ENCODE measurements at regions of chr6 and their contacts with region 1.

Region 1: GRCh38 chr6:37169496-37170272 is at the start of gene PIM1:
- DNase-seq: peak; percentile 98
- ATAC-seq: peak; percentile 84
- H3K4me3 ChIP-seq: peak within 1 kb of the TSS; percentile 23 to 87 (median 82)
- H3K4me3 Mint-ChIP-seq: peak within 1 kb of the TSS; percentile 92
- H3K27ac ChIP-seq: peak within 1 kb of the TSS; percentile 68 to 85
- H3K27ac Mint-ChIP-seq: peak within 1 kb of the TSS; percentile 93
- H3K4me1 ChIP-seq: peaks cover 38 to 46% of the 10 kb centered on the region in 2 donors
- H3K4me1 Mint-ChIP-seq: peaks cover 45% of the 10 kb centered on the region
- H3K27me3 ChIP-seq: no peaks in the 10 kb centered on the region
- H3K27me3 Mint-ChIP-seq: no peaks in the 10 kb centered on the region
- CTCF ChIP-seq: no peak
- total RNA-seq, gene PIM1: 99.7 and 102 TPM in 2 replicates

Region 2: DNA sequence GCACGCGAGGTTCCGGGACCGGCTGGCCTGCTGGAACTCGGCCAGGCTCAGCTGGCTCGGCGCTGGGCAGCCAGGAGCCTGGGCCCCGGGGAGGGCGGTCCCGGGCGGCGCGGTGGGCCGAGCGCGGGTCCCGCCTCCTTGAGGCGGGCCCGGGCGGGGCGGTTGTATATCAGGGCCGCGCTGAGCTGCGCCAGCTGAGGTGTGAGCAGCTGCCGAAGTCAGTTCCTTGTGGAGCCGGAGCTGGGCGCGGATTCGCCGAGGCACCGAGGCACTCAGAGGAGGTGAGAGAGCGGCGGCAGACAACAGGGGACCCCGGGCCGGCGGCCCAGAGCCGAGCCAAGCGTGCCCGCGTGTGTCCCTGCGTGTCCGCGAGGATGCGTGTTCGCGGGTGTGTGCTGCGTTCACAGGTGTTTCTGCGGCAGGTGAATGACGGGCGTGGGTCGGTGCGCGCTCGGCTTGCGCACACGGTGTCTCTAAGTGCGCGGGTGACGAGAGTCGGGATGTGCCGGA is 491.1 kb before region 1 on chr6 and contains the start of gene CDKN1A:
- CTCF ChIA-PET with region 1: no interaction called
- POLR2A ChIA-PET with region 1: interaction called, 3 read pairs
- intact Hi-C with region 1: loop called (anchors 10 kb)
- DNase-seq: peak; percentile 92
- ATAC-seq: peak; percentile 51
- H3K4me3 ChIP-seq: peak within 1 kb of the TSS; percentile 55 to 98 (median 71)
- H3K4me3 Mint-ChIP-seq: peak within 1 kb of the TSS; percentile 99
- H3K27ac ChIP-seq: peak within 1 kb of the TSS; percentile 97 to 100
- H3K27ac Mint-ChIP-seq: peak within 1 kb of the TSS; percentile 88
- H3K4me1 ChIP-seq: peaks cover 33 to 48% of the 10 kb centered on the region in 2 donors
- H3K4me1 Mint-ChIP-seq: peaks cover 41% of the 10 kb centered on the region
- H3K27me3 ChIP-seq: no peaks in the 10 kb centered on the region
- H3K27me3 Mint-ChIP-seq: no peaks in the 10 kb centered on the region
- CTCF ChIP-seq: no peak
- total RNA-seq, gene CDKN1A: 45.5 and 47.2 TPM in 2 replicates

Region 3: DNA sequence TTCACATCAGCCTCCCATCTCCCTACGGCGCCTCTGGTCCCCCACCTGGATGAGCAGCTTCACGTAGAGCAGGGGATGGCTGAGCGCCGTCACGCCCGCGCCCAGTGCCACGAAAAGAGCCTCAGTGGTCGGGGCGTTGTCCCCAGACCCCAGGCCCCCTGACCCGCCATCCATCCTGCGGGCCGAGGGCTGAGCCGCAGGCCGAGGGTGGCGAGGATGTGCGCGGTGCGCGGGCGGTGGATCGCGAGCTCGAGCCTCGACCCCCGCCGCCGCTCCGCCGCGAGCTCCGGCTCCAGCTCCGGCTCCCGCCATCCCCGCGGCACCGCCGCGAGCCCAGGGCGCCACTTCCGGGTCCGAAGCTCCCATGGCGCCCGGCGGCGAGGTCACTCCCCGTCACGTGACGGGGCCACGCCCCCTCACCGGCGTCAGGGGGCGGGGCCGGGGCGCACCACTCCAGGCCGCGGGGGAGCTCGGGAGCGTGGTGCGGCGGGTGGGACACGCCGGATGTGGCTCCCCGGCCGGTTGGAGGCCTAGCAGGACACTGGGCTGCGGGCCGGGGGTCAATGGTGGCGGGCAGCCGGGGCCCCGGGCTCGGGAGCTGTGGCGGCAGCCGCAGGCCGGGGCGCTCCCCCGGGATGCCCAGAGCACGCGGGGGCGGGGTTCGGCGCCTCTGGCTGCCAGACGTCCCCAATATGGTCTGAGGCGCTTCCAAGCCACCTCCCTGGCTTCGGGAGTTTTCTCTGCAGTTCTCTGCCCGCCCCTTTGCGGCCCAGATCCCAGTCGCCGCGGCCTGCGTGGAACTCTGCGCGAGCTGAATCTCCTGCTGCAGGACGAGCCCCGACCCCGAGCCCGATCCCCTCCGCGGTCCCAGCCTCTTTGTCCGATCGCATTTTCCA is 183.6 kb before region 1 on chr6 and contains the start of gene MTCH1:
- CTCF ChIA-PET with region 1: interaction called, 6 read pairs
- POLR2A ChIA-PET with region 1: no interaction called
- intact Hi-C with region 1: loop called (anchors 1 kb)
- DNase-seq: peak; percentile 96
- ATAC-seq: peak; percentile 88
- H3K4me3 ChIP-seq: peak within 1 kb of the TSS; percentile 66 to 98 (median 88)
- H3K4me3 Mint-ChIP-seq: peak within 1 kb of the TSS; percentile 96
- H3K27ac ChIP-seq: peak within 1 kb of the TSS; percentile 53 to 89
- H3K27ac Mint-ChIP-seq: peak within 1 kb of the TSS; percentile 98
- H3K4me1 ChIP-seq: peaks cover 33 to 35% of the 10 kb centered on the region in 2 donors
- H3K4me1 Mint-ChIP-seq: peaks cover 24% of the 10 kb centered on the region
- H3K27me3 ChIP-seq: no peaks in the 10 kb centered on the region
- H3K27me3 Mint-ChIP-seq: no peaks in the 10 kb centered on the region
- CTCF ChIP-seq: no peak
- total RNA-seq, gene MTCH1: 150 and 160 TPM in 2 replicates

Region 4: GRCh38 chr6:37029249-37029971 is 140.3 kb before region 1 on chr6:
- CTCF ChIA-PET with region 1: interaction called, 510 read pairs
- POLR2A ChIA-PET with region 1: interaction called, 11 read pairs
- intact Hi-C with region 1: loop called (anchors 1 kb)
- DNase-seq: peak; percentile 69
- ATAC-seq: peak; percentile 78
- H3K4me3 ChIP-seq: no peak overlapping the region
- H3K4me3 Mint-ChIP-seq: no peak overlapping the region
- H3K27ac ChIP-seq: no peak overlapping the region
- H3K27ac Mint-ChIP-seq: peak overlapping the region; percentile 84
- H3K4me1 ChIP-seq: peaks cover 0 to 8% of the 10 kb centered on the region in 2 donors
- H3K4me1 Mint-ChIP-seq: peaks cover 24% of the 10 kb centered on the region
- H3K27me3 ChIP-seq: no peaks in the 10 kb centered on the region
- H3K27me3 Mint-ChIP-seq: no peaks in the 10 kb centered on the region
- CTCF ChIP-seq: peak; percentile 80

Region 5: GRCh38 chr6:37056439-37057127 is 113.1 kb before region 1 on chr6:
- CTCF ChIA-PET with region 1: interaction called, 487 read pairs
- POLR2A ChIA-PET with region 1: interaction called, 121 read pairs
- intact Hi-C with region 1: loop called (anchors 1 kb)
- DNase-seq: no peak
- ATAC-seq: no peak
- H3K4me3 ChIP-seq: no peak overlapping the region
- H3K4me3 Mint-ChIP-seq: no peak overlapping the region
- H3K27ac ChIP-seq: no peak overlapping the region
- H3K27ac Mint-ChIP-seq: no peak overlapping the region
- H3K4me1 ChIP-seq: peaks cover 4 to 8% of the 10 kb centered on the region in 2 donors
- H3K4me1 Mint-ChIP-seq: peaks cover 7% of the 10 kb centered on the region
- H3K27me3 ChIP-seq: no peaks in the 10 kb centered on the region
- H3K27me3 Mint-ChIP-seq: no peaks in the 10 kb centered on the region
- CTCF ChIP-seq: no peak

Region 6: GRCh38 chr6:37155394-37156312 is 14.0 kb before region 1 on chr6:
- CTCF ChIA-PET with region 1: interaction called, 68 read pairs
- POLR2A ChIA-PET with region 1: interaction called, 16 read pairs
- intact Hi-C with region 1: loop called (anchors 1 kb)
- DNase-seq: peak; percentile 91
- ATAC-seq: peak; percentile 88
- H3K4me3 ChIP-seq: peak overlapping the region in 2 of 5 experiments; percentile 23 to 58
- H3K4me3 Mint-ChIP-seq: peak overlapping the region; percentile 50
- H3K27ac ChIP-seq: peak overlapping the region; percentile 89 to 97
- H3K27ac Mint-ChIP-seq: peak overlapping the region; percentile 84
- H3K4me1 ChIP-seq: peaks cover 37 to 41% of the 10 kb centered on the region in 2 donors
- H3K4me1 Mint-ChIP-seq: peaks cover 41% of the 10 kb centered on the region
- H3K27me3 ChIP-seq: no peaks in the 10 kb centered on the region
- H3K27me3 Mint-ChIP-seq: no peaks in the 10 kb centered on the region
- CTCF ChIP-seq: no peak

Region 7: GRCh38 chr6:37259191-37259590 is 89.5 kb after region 1 on chr6:
- CTCF ChIA-PET with region 1: no interaction called
- POLR2A ChIA-PET with region 1: no interaction called
- intact Hi-C with region 1: no loop called
- DNase-seq: peak; percentile 26
- ATAC-seq: no peak
- H3K4me3 ChIP-seq: no peak overlapping the region
- H3K4me3 Mint-ChIP-seq: peak overlapping the region; percentile 59
- H3K27ac ChIP-seq: peak overlapping the region in 1 of 2 donors; percentile 97
- H3K27ac Mint-ChIP-seq: peak overlapping the region; percentile 18
- H3K4me1 ChIP-seq: peaks cover 20 to 21% of the 10 kb centered on the region in 2 donors
- H3K4me1 Mint-ChIP-seq: peaks cover 38% of the 10 kb centered on the region
- H3K27me3 ChIP-seq: no peaks in the 10 kb centered on the region
- H3K27me3 Mint-ChIP-seq: no peaks in the 10 kb centered on the region
- CTCF ChIP-seq: no peak